ENCODE measurements at regions of chr15 and their contacts with region 1.

Region 1: GRCh38 chr15:80455668-80456442 is 51.7 kb downstream of the ARNT2 start:
- DNase-seq: peak; percentile 52 to 56
- H3K4me3 ChIP-seq: no peak overlapping the region
- H3K27ac ChIP-seq: no peak overlapping the region
- H3K4me1 ChIP-seq: no peaks in the 10 kb centered on the region
- H3K27me3 ChIP-seq: no peaks in the 10 kb centered on the region
- CTCF ChIP-seq: peak; percentile 84 to 95 (median 91)
- POLR2A ChIP-seq: no peak

Region 2: DNA sequence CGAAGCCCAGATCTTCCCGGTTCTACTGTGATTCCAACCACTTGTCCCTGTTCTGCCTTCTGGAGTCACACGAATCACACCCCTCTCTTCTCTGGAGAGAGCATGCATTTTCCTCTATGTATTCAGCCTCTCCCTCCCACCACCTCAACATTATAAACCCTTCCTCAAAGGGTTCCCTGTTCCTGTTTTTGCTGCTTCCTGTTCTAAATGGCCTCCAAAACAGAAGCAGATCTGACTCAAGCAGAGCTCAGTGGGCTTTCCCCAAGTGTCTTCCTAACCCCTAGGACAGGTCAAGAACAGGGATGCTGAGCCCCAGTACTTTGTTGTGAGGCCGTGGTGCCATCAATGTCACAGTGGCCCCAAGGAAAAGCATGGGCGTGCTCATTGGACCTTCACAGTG is 127.4 kb before region 1 on chr15:
- intact Hi-C with region 1: no loop called
- DNase-seq: no peak
- H3K4me3 ChIP-seq: no peak overlapping the region
- H3K27ac ChIP-seq: no peak overlapping the region
- H3K4me1 ChIP-seq: no peaks in the 10 kb centered on the region
- H3K27me3 ChIP-seq: no peaks in the 10 kb centered on the region
- CTCF ChIP-seq: no peak
- POLR2A ChIP-seq: no peak

Region 3: DNA sequence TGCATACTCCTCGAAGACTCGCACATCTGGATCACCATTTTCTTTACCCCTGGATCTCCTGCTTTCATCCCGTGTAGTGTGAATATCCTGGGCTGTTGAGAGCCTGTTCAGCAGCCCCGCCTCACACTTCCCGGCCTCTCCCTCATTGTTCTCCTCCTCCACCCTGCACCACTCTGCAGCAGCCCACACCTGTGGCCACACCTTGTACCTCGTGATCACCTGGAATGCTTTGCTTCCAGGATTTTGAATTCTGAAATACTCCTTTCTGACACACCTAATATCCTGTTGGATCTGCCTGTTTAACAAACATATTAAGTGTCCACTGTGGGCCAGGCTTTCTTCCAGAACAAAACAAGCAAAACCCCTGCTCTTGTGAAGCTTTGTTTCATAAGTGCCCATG is 253.7 kb after region 1 on chr15:
- intact Hi-C with region 1: loop called (anchors 10 kb)
- DNase-seq: no peak
- H3K4me3 ChIP-seq: no peak overlapping the region
- H3K27ac ChIP-seq: no peak overlapping the region
- H3K4me1 ChIP-seq: no peaks in the 10 kb centered on the region
- H3K27me3 ChIP-seq: no peaks in the 10 kb centered on the region
- CTCF ChIP-seq: no peak
- POLR2A ChIP-seq: no peak

Region 4: GRCh38 chr15:80776420-80777045 is 320.7 kb after region 1 on chr15:
- intact Hi-C with region 1: loop called (anchors 5 kb)
- DNase-seq: peak; percentile 48 to 58
- H3K4me3 ChIP-seq: no peak overlapping the region
- H3K27ac ChIP-seq: no peak overlapping the region
- H3K4me1 ChIP-seq: peaks cover 0 to 14% of the 10 kb centered on the region in 2 donors
- H3K27me3 ChIP-seq: no peaks in the 10 kb centered on the region
- CTCF ChIP-seq: peak; percentile 59 to 74 (median 70)
- POLR2A ChIP-seq: no peak

Region 5: GRCh38 chr15:80967451-80967850 is 511.6 kb after region 1 on chr15:
- intact Hi-C with region 1: loop called (anchors 5 kb)
- DNase-seq: no peak
- H3K4me3 ChIP-seq: no peak overlapping the region
- H3K27ac ChIP-seq: no peak overlapping the region
- H3K4me1 ChIP-seq: no peaks in the 10 kb centered on the region
- H3K27me3 ChIP-seq: no peaks in the 10 kb centered on the region
- CTCF ChIP-seq: no peak
- POLR2A ChIP-seq: no peak